ENCODE measurements at regions of chr12 and their contacts with region 1.

Region 1: GRCh38 chr12:21697904-21698630 is 40.4 kb upstream of the LDHB start:
- DNase-seq: peak; percentile 22
- H3K4me3 ChIP-seq: no peak overlapping the region; a peak in 2 of 4 replicates
- H3K27ac ChIP-seq: no peak overlapping the region
- H3K4me1 ChIP-seq: no peaks in the 10 kb centered on the region; a peak in 1 of 4 replicates
- H3K27me3 ChIP-seq: peaks cover 8% of the 10 kb centered on the region; the same call in 1 of the 2 replicates
- CTCF ChIP-seq: peak; percentile 82
- EP300 ChIP-seq: no peak
- RAD21 ChIP-seq: peak; percentile 79

Region 2: DNA sequence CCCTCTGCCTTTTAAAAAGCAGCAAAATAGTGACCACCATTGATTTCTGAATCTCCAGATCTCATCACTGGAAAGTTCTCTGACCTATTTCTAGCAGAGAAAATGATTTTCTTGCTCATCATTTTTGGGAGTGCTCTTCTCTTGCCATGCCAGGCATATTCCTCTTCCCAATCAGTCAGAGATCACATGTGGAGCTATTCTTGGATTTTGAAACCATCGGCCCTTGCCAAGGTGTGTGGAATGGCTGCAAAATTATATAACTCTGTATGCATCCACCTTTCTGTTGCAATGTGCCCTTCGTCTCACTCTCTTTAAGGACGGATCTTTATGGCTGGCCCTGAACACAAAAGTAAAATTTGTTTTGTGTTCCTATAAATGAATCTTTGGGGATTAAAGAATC is 15.0 kb before region 1 on chr12:
- CTCF ChIA-PET with region 1: interaction called, 22 read pairs
- POLR2A ChIA-PET with region 1: no interaction called
- DNase-seq: no peak
- H3K4me3 ChIP-seq: no peak overlapping the region
- H3K27ac ChIP-seq: no peak overlapping the region
- H3K4me1 ChIP-seq: no peaks in the 10 kb centered on the region
- H3K27me3 ChIP-seq: peaks cover 13% of the 10 kb centered on the region; the same call in 1 of the 2 replicates
- CTCF ChIP-seq: no peak
- EP300 ChIP-seq: no peak
- RAD21 ChIP-seq: no peak

Region 3: DNA sequence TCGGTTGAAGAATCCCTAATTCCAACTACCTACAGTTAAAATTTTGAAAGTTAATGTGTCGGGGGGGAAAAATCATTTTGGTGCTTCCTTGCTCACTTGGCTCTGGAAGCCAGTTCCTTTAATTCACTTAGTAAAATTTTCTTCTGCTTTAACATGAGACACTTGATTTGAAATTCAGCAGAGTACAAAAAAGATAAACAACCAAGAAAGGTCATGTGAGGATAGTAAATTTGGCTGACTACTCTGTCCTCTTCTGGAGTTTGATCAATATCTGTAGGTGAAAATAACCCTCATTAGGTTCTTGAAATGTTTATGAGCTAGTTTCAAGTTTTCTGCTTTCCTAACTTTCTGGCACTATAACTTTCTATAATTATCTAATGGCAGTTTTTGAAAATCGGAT is 33.1 kb after region 1 on chr12:
- CTCF ChIA-PET with region 1: no interaction called
- POLR2A ChIA-PET with region 1: no interaction called
- DNase-seq: no peak
- H3K4me3 ChIP-seq: no peak overlapping the region
- H3K27ac ChIP-seq: no peak overlapping the region
- H3K4me1 ChIP-seq: no peaks in the 10 kb centered on the region
- H3K27me3 ChIP-seq: no peaks in the 10 kb centered on the region
- CTCF ChIP-seq: no peak
- EP300 ChIP-seq: no peak
- RAD21 ChIP-seq: no peak

Region 4: GRCh38 chr12:21773263-21773741 is 75.2 kb after region 1 on chr12:
- CTCF ChIA-PET with region 1: interaction called, 13 read pairs
- POLR2A ChIA-PET with region 1: no interaction called
- DNase-seq: peak; percentile 43
- H3K4me3 ChIP-seq: peak overlapping the region in 1 of 2 experiments; percentile 50; a peak in 1 of 4 replicates
- H3K27ac ChIP-seq: peak overlapping the region in 1 of 2 experiments; percentile 86; a peak in 2 of 4 replicates
- H3K4me1 ChIP-seq: peaks cover 0 to 9% of the 10 kb centered on the region in 2 experiments; a peak in 3 of 4 replicates
- H3K27me3 ChIP-seq: peaks cover 10% of the 10 kb centered on the region
- CTCF ChIP-seq: peak; percentile 29
- EP300 ChIP-seq: no peak
- RAD21 ChIP-seq: peak; percentile 52

Region 5: DNA sequence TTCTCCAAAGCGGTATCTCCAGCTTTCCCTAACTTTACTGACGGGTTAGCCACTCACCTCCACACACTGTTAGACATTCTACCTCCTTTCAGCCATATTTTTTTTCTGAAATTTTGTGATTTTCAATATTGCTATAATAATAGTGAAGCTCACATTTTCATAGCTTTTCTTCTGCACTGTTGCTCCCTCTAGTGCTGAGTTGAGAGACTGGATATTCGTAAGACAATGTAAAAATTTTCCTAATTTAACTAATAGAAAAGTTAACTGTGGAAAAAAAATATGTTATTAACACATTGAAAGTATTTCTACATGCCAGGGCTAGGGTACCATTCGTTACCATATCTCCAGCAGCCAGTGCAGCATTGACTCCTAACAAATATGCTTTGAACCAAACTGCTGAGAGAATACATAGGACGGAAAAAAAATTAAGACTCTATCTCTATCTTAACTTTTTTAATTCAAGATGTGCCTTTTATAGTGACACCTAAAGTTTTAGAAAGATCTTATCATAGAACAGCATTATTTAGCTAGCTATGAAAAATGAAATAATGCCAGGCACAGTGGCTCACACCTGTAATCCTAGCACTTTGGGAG is 291.8 kb after region 1 on chr12:
- CTCF ChIA-PET with region 1: interaction called, 143 read pairs
- POLR2A ChIA-PET with region 1: no interaction called
- DNase-seq: peak; percentile 33
- H3K4me3 ChIP-seq: no peak overlapping the region; a peak in 1 of 4 replicates
- H3K27ac ChIP-seq: no peak overlapping the region
- H3K4me1 ChIP-seq: no peaks in the 10 kb centered on the region
- H3K27me3 ChIP-seq: peaks cover 8% of the 10 kb centered on the region; the same call in 1 of the 2 replicates
- CTCF ChIP-seq: peak; percentile 77
- EP300 ChIP-seq: no peak
- RAD21 ChIP-seq: peak; percentile 79

Region 6: DNA sequence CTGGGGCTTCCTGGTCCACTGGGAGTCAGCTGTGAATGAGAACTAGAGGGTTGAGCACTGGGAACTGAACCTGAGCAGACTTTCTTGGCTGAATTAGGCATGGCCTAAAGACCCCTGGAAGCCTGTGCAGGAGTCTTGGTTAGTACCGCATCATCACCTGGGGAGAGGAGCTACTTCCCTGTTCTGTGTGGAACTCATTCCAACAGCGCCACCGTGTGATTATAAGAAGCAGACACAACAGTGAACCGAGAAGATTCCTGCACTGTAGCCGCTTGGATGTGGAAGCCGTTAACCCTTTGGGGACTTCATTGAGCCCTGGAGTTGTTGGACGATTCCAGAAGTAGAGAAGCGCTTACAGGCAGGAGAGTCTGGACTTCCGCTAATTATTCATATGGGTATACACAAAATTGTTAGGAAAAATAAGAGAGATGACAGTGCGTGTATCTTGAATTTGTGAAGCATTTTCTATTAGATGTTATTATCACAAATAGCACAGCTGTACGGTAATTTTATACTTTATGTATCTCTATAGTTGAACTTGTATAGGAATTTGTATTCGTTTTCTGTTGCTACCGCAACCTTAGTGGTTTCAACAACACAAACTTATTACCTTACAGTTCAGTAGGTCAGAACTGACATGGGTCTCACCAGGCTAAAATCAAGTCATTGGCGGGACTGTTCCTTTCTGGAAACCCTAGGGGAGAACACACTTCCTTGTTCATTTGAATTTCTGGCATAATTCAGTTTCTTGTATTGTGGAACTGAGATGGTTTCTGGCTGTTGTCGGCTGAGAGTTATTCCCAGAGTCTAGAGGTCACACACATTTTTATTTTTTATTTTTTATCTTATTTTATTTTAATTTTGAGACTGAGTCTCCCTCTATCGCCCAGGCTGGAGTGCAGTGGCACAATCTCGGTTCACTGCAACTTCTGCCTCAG is 745.6 kb after region 1 on chr12:
- CTCF ChIA-PET with region 1: interaction called, 13 read pairs
- POLR2A ChIA-PET with region 1: no interaction called
- DNase-seq: peak; percentile 57
- H3K4me3 ChIP-seq: peak overlapping the region in 1 of 2 experiments; percentile 36; a peak in 2 of 4 replicates
- H3K27ac ChIP-seq: no peak overlapping the region
- H3K4me1 ChIP-seq: peaks cover 0 to 8% of the 10 kb centered on the region in 2 experiments; a peak in 1 of 4 replicates
- H3K27me3 ChIP-seq: no peaks in the 10 kb centered on the region; the same call in 1 of the 2 replicates
- CTCF ChIP-seq: peak; percentile 79
- EP300 ChIP-seq: no peak
- RAD21 ChIP-seq: peak; percentile 86

Region 7: GRCh38 chr12:23066105-23066504 is 1368.0 kb after region 1 on chr12:
- CTCF ChIA-PET with region 1: no interaction called
- POLR2A ChIA-PET with region 1: no interaction called
- DNase-seq: no peak
- H3K4me3 ChIP-seq: no peak overlapping the region
- H3K27ac ChIP-seq: no peak overlapping the region
- H3K4me1 ChIP-seq: no peaks in the 10 kb centered on the region
- H3K27me3 ChIP-seq: no peaks in the 10 kb centered on the region
- CTCF ChIP-seq: no peak
- EP300 ChIP-seq: no peak
- RAD21 ChIP-seq: no peak